ENCODE measurements at regions of chr12 and their contacts with region 1.

Region 1: DNA sequence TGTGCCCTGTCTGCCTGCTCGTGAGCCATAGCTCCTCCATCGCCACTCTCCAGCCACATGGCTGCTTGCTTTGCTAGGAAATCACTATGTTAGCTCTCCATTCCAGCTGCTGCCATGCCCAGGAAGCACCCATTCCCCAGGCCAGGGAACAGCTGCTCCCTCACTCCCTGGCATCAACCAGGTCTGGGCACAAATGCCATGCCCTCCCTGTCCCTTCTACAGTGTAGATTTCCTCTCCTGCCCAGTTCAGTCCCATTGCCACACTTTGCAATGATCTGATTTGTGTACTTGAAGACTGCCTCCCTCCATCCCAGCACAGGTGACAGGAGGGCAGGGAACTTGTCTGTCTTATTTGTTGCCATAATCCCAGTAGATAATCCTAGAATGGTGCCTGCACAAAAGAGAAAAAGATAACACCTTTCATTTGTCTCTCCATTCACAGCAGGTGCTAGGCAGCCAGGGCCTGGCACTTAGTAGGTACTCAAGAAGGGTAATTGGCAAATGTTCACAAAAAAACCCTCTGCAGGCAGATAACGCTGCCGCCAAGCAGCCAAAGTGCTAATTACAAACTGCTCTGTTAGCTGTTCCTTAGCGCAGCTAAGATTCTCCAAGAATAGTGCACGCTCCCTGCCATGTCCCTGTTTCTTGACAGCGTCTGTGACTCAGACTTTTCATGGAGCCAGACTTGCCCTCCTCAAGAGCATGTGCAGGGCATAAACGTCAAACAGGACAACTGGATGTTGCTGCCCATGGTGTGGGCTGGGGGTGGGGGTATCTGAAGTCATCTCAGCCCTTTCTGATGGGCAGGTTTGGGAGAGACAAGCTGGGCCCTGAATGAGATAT is 69.1 kb downstream of the ARL6IP4 start:
- DNase-seq: no peak
- ATAC-seq: no peak; the same call in 2 of the 3 replicates
- H3K4me3 ChIP-seq: no peak overlapping the region
- H3K27ac ChIP-seq: no peak overlapping the region
- H3K4me1 ChIP-seq: no peaks in the 10 kb centered on the region; a peak in 2 of 5 replicates
- H3K27me3 ChIP-seq: no peaks in the 10 kb centered on the region
- CTCF ChIP-seq: no peak
- EP300 ChIP-seq: no peak
- POLR2A ChIP-seq: no peak
- RAD21 ChIP-seq: no peak

Region 2: GRCh38 chr12:122974892-122975789 is 74.5 kb before region 1 on chr12 and contains the start of gene OGFOD2:
- CTCF ChIA-PET with region 1: no interaction called
- POLR2A ChIA-PET with region 1: no interaction called
- in situ Hi-C with region 1: no loop called
- intact Hi-C with region 1: no loop called
- DNase-seq: peak; percentile 85 to 97 (median 88)
- ATAC-seq: peak; percentile 85
- H3K4me3 ChIP-seq: peak within 1 kb of the TSS; percentile 66
- H3K27ac ChIP-seq: peak within 1 kb of the TSS; percentile 97
- H3K4me1 ChIP-seq: peaks cover 17 to 45% of the 10 kb centered on the region in 2 experiments
- H3K27me3 ChIP-seq: no peaks in the 10 kb centered on the region
- CTCF ChIP-seq: no peak
- EP300 ChIP-seq: peak; percentile 62; the same call in 1 of the 2 replicates
- POLR2A ChIP-seq: peak; percentile 81
- RAD21 ChIP-seq: no peak
- polyA plus RNA-seq, gene OGFOD2: 1.4 to 3.8 TPM

Region 3: DNA sequence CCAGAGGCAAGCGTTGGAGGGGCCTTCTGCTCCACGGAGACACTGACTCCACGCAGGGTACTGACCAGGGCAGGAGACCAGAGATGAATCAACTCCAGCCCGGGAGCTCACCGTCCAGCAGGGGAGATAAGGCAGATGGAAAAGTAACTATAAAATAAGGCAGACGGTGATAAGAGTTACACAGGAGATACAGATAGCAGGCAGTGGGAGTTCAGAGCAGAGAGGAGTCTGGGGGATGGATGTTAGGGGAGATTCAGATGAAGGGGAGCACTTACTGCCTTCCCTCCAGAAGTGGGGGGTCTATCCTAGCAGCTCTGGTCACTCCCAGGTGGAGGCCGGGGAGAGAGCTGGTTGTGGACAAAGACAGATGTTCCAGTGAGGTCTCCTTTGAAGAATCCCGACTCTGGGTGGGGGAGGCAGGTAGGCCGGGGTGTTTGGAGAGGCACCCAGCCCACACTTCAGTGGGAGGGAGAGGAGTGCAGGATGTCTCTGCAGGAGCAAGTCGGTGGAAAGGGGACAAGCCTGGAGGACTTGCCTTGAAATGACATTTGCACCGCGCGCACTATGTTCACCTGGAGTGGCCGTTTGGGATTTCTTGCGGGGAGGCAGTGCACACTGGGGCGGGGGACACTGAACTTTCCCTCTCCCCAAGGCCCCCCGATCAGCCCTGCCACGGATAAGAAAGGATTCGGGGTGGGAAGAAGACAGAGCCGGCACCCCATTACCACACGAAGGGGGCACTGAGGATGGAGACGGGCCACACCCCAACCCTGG is 100.1 kb after region 1 on chr12:
- CTCF ChIA-PET with region 1: interaction called, 3 read pairs
- POLR2A ChIA-PET with region 1: no interaction called
- in situ Hi-C with region 1: no loop called
- intact Hi-C with region 1: loop called (anchors 5 kb)
- DNase-seq: peak; percentile 72 to 81 (median 80)
- ATAC-seq: peak; percentile 51
- H3K4me3 ChIP-seq: peak overlapping the region; percentile 56
- H3K27ac ChIP-seq: peak overlapping the region; percentile 48; the same call in 2 of the 3 replicates
- H3K4me1 ChIP-seq: peaks cover 26 to 30% of the 10 kb centered on the region in 2 experiments; a peak in 4 of 5 replicates
- H3K27me3 ChIP-seq: no peaks in the 10 kb centered on the region
- CTCF ChIP-seq: no peak
- EP300 ChIP-seq: peak; percentile 68
- POLR2A ChIP-seq: no peak
- RAD21 ChIP-seq: no peak